Activated T-helper 1 cell treated with anti-CD3 and anti-CD28 coated beads, Interleukin-12 subunit alpha, Interleukin-12 subunit beta, Interleukin-2, Interleukin-4 antibody, amounts not matched to agents 30 ng/mL and 10 ng/mL and 1 ng/mL, durations not matched to agents 14 hours and 24 hours and 36 hours (primary cell): ENCODE measurements at regions of chr6 and their contacts with region 1.

Region 1: GRCh38 chr6:138109042-138109997 is 2.1 kb upstream of the PERP start:
- DNase-seq: peak; percentile 67
- H3K4me3 Mint-ChIP-seq: peak overlapping the region; percentile 62
- H3K27ac Mint-ChIP-seq: no peak overlapping the region
- H3K4me1 Mint-ChIP-seq: peaks cover 29% of the 10 kb centered on the region
- H3K27me3 Mint-ChIP-seq: peaks cover 28% of the 10 kb centered on the region

Region 2: GRCh38 chr6:137224799-137225198 is 884.5 kb before region 1 on chr6:
- intact Hi-C with region 1: loop called (anchors 10 kb)
- DNase-seq: no peak
- H3K4me3 Mint-ChIP-seq: no peak overlapping the region
- H3K27ac Mint-ChIP-seq: peak overlapping the region; percentile 32
- H3K4me1 Mint-ChIP-seq: peaks cover 60% of the 10 kb centered on the region
- H3K27me3 Mint-ChIP-seq: peaks cover 14% of the 10 kb centered on the region

Region 3: GRCh38 chr6:137415127-137415833 is 694.0 kb before region 1 on chr6:
- intact Hi-C with region 1: loop called (anchors 1 kb)
- DNase-seq: peak; percentile 57
- H3K4me3 Mint-ChIP-seq: peak overlapping the region; percentile 81
- H3K27ac Mint-ChIP-seq: peak overlapping the region; percentile 53
- H3K4me1 Mint-ChIP-seq: peaks cover 14% of the 10 kb centered on the region
- H3K27me3 Mint-ChIP-seq: peaks cover 23% of the 10 kb centered on the region

Region 4: DNA sequence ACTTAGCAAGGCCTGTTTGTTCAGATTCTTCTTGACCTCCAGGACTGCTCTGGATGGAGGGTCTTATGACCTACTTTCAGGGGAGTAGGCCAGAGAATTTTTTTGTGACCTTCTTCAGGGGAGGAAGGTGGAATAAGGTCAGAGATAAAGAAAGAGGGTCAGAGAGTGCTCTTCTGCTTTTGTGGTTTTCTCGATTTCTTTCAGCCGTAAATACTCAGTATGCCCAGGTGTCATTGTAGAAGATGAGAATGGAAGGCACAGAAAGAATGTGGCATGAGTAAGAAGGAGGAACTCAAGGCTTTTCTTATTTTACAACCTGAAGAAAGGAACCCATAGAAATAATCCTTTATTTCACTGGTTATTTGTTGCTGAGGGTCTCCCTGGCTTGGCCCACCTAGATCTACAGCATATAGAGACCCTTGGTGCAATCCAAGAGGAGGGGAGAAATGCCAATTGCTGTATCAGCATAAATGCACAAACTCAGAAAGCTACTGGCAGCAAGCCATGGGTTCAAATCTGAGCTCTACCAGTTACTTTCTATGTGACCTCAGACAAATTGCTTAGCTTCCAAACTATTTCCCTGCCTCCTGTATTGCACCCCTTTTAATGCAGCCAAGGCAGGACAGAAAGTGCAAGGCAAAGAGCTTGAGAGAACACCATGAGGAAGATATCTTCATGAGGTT is 683.2 kb before region 1 on chr6:
- intact Hi-C with region 1: no loop called
- DNase-seq: no peak
- H3K4me3 Mint-ChIP-seq: no peak overlapping the region
- H3K27ac Mint-ChIP-seq: no peak overlapping the region
- H3K4me1 Mint-ChIP-seq: peaks cover 9% of the 10 kb centered on the region
- H3K27me3 Mint-ChIP-seq: peaks cover 14% of the 10 kb centered on the region

Region 5: DNA sequence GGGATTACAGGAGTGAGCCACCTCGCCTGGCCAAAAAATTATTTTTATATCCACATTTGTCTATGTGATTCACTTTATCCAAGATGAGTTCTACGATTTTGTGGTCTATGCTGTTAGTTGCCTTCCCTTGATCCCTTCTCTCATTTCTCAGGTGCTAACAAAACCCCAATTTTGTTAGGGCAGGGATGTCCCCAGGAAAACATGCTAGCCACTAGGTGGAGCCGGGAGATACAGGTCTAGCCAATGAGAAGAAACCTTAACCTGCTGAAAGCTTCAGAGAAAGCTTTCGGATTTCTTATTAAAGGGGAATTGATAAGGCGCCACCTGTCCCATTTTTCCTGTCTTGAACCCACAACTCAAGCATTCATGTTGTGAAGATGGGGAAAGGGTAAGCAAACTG is 447.7 kb before region 1 on chr6:
- intact Hi-C with region 1: loop called (anchors 2 kb)
- DNase-seq: no peak
- H3K4me3 Mint-ChIP-seq: no peak overlapping the region
- H3K27ac Mint-ChIP-seq: no peak overlapping the region
- H3K4me1 Mint-ChIP-seq: peaks cover 58% of the 10 kb centered on the region
- H3K27me3 Mint-ChIP-seq: peaks cover 2% of the 10 kb centered on the region

Region 6: GRCh38 chr6:137692806-137693205 is 416.5 kb before region 1 on chr6:
- intact Hi-C with region 1: no loop called
- DNase-seq: no peak
- H3K4me3 Mint-ChIP-seq: no peak overlapping the region
- H3K27ac Mint-ChIP-seq: no peak overlapping the region
- H3K4me1 Mint-ChIP-seq: peaks cover 48% of the 10 kb centered on the region
- H3K27me3 Mint-ChIP-seq: no peaks in the 10 kb centered on the region

Region 7: DNA sequence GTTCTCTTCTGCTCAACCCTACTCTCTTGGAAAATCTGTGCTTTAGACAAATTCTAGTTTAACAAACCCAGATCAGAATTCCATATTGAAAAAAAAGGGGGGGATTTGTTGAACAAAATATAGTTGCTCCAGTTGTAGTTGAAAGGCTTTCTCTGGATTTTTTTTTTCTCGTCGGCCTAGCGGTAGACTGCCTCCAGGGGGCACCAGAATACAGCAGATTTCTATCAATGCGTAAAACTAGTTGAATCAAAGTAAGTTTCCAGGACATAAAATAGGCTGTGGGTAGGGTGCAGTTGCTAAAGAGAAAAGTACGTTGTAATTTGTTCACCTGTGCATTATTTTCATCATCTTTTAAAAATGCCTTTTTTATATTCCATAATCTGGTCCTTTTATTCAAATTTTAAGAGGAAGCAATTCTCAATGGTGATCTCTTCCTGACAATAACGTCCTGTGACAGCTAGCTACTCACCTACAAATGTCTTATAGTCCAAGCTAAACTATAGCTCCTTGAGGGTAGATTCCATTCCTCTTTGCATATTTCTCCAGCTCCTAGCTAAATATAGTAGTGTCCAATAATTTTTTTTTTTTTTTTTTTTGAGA is 107.5 kb before region 1 on chr6:
- intact Hi-C with region 1: loop called (anchors 1 kb)
- DNase-seq: peak; percentile 38
- H3K4me3 Mint-ChIP-seq: no peak overlapping the region
- H3K27ac Mint-ChIP-seq: no peak overlapping the region
- H3K4me1 Mint-ChIP-seq: peaks cover 27% of the 10 kb centered on the region
- H3K27me3 Mint-ChIP-seq: peaks cover 6% of the 10 kb centered on the region

Region 8: DNA sequence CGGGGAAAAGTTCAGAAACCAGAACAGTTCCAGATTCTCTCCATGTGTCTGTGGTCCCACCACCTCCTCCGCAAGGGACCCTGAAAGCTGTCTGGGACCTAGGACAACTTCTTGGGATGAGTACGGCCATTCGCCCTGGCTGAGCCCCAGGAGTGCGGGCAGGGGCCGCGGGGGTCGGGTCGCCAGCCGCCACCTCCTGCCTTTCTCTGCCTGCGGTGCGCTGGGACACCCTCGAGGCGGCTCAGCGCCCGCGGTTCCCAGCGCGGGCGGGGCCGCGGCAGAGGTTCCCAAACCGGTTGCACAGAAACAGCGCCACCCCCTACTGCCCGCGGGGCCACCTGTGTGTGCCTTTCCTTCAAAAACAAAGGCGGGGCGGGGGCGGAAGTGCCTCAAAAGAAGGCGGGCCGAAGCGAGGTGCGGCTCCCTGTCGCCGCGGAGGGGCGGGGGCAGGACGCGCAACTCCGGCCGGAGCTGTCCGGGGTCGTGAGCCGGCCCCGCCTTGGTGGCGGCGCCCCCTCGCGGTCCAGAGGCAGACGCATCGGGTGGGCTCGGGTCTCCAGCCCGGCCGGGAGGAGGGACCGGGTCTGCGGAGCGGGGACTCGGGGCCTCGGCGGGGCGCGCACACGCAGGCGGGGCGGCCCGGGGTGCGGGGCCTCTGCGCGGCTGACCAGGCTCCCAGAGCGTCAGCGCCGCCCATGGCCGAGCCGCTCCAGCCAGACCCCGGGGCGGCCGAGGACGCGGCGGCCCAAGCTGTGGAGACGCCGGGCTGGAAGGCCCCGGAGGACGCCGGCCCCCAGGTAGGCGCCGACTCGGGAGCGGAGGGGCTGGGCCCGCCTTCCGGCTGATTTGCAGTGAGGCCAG is 294.7 kb after region 1 on chr6 and contains the start of gene HEBP2:
- intact Hi-C with region 1: loop called (anchors 1 kb)
- DNase-seq: peak; percentile 87
- H3K4me3 Mint-ChIP-seq: peak within 1 kb of the TSS; percentile 84
- H3K27ac Mint-ChIP-seq: peak within 1 kb of the TSS; percentile 59
- H3K4me1 Mint-ChIP-seq: peaks cover 18% of the 10 kb centered on the region
- H3K27me3 Mint-ChIP-seq: peaks cover 8% of the 10 kb centered on the region
- total RNA-seq, gene HEBP2: 18.9 and 21.4 TPM in 2 replicates